ENCODE measurements at regions of chr17 and their contacts with region 1.

Region 1: GRCh38 chr17:50816771-50817751 is 18.3 kb upstream of the WFIKKN2 start:
- DNase-seq: peak; percentile 64
- H3K4me3 Mint-ChIP-seq: no peak overlapping the region
- H3K27ac Mint-ChIP-seq: peak overlapping the region; percentile 13
- H3K4me1 Mint-ChIP-seq: peaks cover 8% of the 10 kb centered on the region
- H3K27me3 Mint-ChIP-seq: peaks cover 61% of the 10 kb centered on the region

Region 2: DNA sequence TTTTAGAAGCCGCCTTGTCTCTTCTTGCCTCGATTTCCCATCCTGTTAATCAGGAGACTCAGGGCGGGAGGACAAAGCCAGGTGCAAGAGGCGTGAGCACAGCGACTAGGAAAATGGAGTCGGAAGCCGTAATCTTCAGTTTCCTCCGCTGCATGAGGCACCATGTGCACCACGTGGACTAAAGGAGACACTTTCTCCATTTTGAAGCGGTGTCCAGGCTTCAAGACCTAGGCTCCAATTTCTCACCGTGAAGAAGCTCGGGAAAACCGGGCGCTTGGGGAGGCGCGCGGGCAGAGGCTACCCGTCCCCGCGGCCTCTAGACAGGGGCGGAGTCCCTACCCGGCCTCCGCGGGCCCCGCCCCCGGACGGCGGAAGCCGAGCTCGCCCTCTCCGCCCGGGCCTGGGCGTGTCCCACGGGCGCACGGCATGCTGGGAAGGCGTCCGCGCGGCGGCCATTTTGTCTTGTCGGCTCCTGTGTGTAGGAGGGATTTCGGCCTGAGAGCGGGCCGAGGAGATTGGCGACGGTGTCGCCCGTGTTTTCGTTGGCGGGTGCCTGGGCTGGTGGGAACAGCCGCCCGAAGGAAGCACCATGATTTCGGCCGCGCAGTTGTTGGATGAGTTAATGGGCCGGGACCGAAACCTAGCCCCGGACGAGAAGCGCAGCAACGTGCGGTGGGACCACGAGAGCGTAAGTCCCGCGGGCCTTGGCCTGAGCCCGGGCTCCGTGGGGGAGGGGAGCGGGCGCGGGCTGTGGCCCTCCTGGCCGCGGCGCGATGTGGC is 97.7 kb before region 1 on chr17 and contains the start of gene LUC7L3:
- CTCF ChIA-PET with region 1: no interaction called
- DNase-seq: peak; percentile 94
- H3K4me3 Mint-ChIP-seq: peak within 1 kb of the TSS; percentile 81
- H3K27ac Mint-ChIP-seq: peak within 1 kb of the TSS; percentile 98
- H3K4me1 Mint-ChIP-seq: peaks cover 20% of the 10 kb centered on the region
- H3K27me3 Mint-ChIP-seq: no peaks in the 10 kb centered on the region

Region 3: DNA sequence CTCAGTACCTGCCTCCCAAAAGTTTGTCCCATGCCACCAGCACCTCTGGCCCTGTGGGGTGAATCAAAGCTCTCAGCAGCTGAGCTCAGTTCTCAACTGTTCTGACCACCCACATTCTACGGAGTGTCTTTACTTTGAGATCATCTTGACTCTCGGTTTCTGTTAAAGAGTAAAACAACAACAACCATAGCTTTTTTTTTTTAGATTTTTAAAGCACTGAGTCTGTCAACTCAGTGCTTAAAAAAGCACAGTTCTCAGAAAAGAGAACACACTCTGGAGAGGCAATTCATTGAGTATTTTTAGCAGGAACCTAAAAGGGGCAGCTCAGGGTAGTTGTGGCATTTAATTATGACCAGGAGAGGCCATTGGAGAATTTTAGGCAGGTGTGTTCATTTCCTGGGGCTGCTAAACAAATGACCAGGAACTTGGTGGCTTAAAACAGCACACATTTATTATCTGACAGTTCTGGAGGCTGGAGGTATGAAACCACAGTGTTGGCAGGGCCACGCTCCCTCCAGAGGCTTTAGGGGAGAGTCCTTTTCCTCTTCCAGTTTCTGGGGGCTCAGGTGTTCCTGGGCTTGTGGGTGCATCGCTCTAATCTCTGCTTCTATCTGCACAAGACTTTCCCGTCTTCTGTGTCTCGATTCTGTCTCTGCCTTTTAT is 11.6 kb after region 1 on chr17:
- CTCF ChIA-PET with region 1: interaction called, 23 read pairs
- DNase-seq: no peak
- H3K4me3 Mint-ChIP-seq: no peak overlapping the region
- H3K27ac Mint-ChIP-seq: no peak overlapping the region
- H3K4me1 Mint-ChIP-seq: no peaks in the 10 kb centered on the region
- H3K27me3 Mint-ChIP-seq: peaks cover 46% of the 10 kb centered on the region

Region 4: GRCh38 chr17:50841949-50842354 is 24.9 kb after region 1 on chr17:
- CTCF ChIA-PET with region 1: interaction called, 18 read pairs
- DNase-seq: peak; percentile 74
- H3K4me3 Mint-ChIP-seq: no peak overlapping the region
- H3K27ac Mint-ChIP-seq: no peak overlapping the region
- H3K4me1 Mint-ChIP-seq: no peaks in the 10 kb centered on the region
- H3K27me3 Mint-ChIP-seq: peaks cover 24% of the 10 kb centered on the region

Measured in activated naive CD4-positive, alpha-beta T cell treated with anti-CD3 and anti-CD28 coated beads, Interleukin-2, amount 10 ng/mL, durations not matched to agents 7 days and 5 days (primary cell).